A673 (cell line): ENCODE measurements at regions of chr3 and their contacts with region 1.

Region 1: GRCh38 chr3:35965908-35966307 is 326.6 kb downstream of the ARPP21 start:
- DNase-seq: peak; percentile 72
- H3K4me3 ChIP-seq: no peak overlapping the region
- H3K27ac ChIP-seq: no peak overlapping the region
- H3K4me1 ChIP-seq: peaks cover 39% of the 10 kb centered on the region
- H3K27me3 ChIP-seq: no peaks in the 10 kb centered on the region
- CTCF ChIP-seq: peak; percentile 76

Region 2: GRCh38 chr3:35664460-35664919 is 301.4 kb before region 1 on chr3:
- CTCF ChIA-PET with region 1: no interaction called
- POLR2A ChIA-PET with region 1: no interaction called
- intact Hi-C with region 1: no loop called
- DNase-seq: peak; percentile 86
- H3K4me3 ChIP-seq: peak overlapping the region; percentile 34
- H3K27ac ChIP-seq: no peak overlapping the region
- H3K4me1 ChIP-seq: peaks cover 30% of the 10 kb centered on the region
- H3K27me3 ChIP-seq: no peaks in the 10 kb centered on the region
- CTCF ChIP-seq: no peak

Region 3: GRCh38 chr3:36132214-36132613 is 166.3 kb after region 1 on chr3:
- CTCF ChIA-PET with region 1: no interaction called
- POLR2A ChIA-PET with region 1: no interaction called
- intact Hi-C with region 1: loop called (anchors 5 kb)
- DNase-seq: peak; percentile 29
- H3K4me3 ChIP-seq: no peak overlapping the region
- H3K27ac ChIP-seq: no peak overlapping the region
- H3K4me1 ChIP-seq: no peaks in the 10 kb centered on the region
- H3K27me3 ChIP-seq: no peaks in the 10 kb centered on the region
- CTCF ChIP-seq: peak; percentile 55

Region 4: DNA sequence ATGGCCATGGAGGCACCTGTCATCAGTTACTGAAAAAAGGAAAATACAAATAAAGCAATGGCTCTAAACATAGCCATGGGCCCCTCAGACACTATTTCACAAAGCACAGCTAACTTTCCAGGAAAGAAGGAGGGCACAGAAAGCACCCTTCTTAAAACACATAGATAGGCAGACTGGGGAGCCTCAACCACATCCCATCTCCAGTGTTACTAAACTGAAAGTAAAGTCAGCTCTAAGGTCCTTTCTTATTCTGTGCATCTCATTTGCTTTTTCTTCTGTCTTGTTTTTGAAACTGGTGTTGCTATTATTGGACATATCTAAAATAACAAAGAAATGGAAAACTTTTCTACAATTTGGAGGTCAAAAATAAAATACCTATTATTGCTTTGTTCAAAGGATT is 366.2 kb after region 1 on chr3:
- CTCF ChIA-PET with region 1: no interaction called
- POLR2A ChIA-PET with region 1: no interaction called
- intact Hi-C with region 1: loop called (anchors 5 kb)
- DNase-seq: no peak
- H3K4me3 ChIP-seq: no peak overlapping the region
- H3K27ac ChIP-seq: no peak overlapping the region
- H3K4me1 ChIP-seq: peaks cover 3% of the 10 kb centered on the region
- H3K27me3 ChIP-seq: no peaks in the 10 kb centered on the region
- CTCF ChIP-seq: no peak

Region 5: DNA sequence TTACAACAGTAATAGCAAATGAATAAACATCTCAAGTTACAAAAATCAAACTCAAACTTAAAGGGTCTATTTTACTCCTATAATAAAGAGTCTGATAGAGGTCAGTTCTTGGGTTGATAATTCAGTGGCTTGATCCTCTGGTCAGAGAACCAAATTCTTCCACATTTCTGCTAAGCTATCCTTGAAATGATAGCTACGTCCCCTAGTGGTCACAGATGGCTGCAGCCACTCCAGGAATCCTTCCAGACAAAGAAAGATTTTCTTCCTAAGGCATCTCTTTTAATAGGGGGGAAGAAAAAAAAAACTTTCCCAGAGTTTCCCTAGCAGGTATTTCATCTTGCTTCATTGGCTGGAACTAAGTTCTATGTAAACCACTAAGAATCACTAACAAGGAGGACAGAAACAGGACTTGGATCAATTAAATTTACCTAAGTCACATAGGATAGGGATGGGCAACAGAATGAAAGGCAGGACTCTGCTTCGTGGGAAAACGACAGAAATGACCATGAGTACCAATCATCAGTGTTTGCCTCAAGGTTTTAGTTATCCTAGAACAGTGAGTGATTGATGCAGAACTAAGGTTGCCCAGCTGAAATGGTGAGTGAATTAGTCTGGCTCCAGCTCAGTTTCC is 575.1 kb after region 1 on chr3:
- CTCF ChIA-PET with region 1: interaction called, 12 read pairs
- POLR2A ChIA-PET with region 1: interaction called, 3 read pairs
- intact Hi-C with region 1: loop called (anchors 1 kb)
- DNase-seq: peak; percentile 38
- H3K4me3 ChIP-seq: no peak overlapping the region
- H3K27ac ChIP-seq: no peak overlapping the region
- H3K4me1 ChIP-seq: no peaks in the 10 kb centered on the region
- H3K27me3 ChIP-seq: no peaks in the 10 kb centered on the region
- CTCF ChIP-seq: peak; percentile 87